CD8-positive, alpha-beta memory T cell (primary cell): ENCODE measurements at regions of chr12 and their contacts with region 1.

Region 1: GRCh38 chr12:95548539-95549391 is 2.5 kb downstream of the USP44 start:
- DNase-seq: peak; percentile 49 to 82 (median 67)
- H3K4me3 ChIP-seq: peak overlapping the region; percentile 62
- H3K4me3 Mint-ChIP-seq: peak overlapping the region; percentile 89 to 93 (median 90)
- H3K27ac ChIP-seq: peak overlapping the region; percentile 52
- H3K27ac Mint-ChIP-seq: peak overlapping the region; percentile 31 to 95 (median 84)
- H3K4me1 ChIP-seq: peaks cover 12% of the 10 kb centered on the region
- H3K4me1 Mint-ChIP-seq: peaks cover 24 to 61% (median 27%) of the 10 kb centered on the region in 3 donors
- H3K27me3 ChIP-seq: no peaks in the 10 kb centered on the region
- H3K27me3 Mint-ChIP-seq: peaks cover 11 to 20% of the 10 kb centered on the region in 2 donors

Region 2: DNA sequence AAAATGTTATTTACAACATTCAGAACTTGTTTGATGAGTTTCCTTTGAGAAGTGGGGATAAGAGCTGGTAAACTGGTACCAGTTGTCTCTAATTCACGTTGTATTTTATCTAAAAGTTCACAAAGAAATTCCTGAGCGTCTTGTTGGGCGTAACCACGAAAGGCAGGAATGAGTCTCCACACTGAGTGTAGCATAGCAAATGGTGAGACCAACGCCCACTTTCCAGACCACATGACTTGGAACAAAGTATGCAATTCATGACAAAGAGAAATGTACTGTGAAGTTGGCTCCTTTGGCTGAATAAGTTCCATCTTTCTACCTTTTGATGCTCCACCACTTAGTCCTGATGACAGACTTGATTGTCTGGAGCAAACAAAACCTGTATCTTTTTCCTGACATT is 15.9 kb before region 1 on chr12:
- CTCF ChIA-PET with region 1: interaction called, 10 read pairs
- POLR2A ChIA-PET with region 1: interaction called, 3 read pairs
- DNase-seq: no peak
- H3K4me3 ChIP-seq: no peak overlapping the region
- H3K4me3 Mint-ChIP-seq: no peak overlapping the region
- H3K27ac ChIP-seq: no peak overlapping the region
- H3K27ac Mint-ChIP-seq: peak overlapping the region in 1 of 8 donors; percentile 10
- H3K4me1 ChIP-seq: no peaks in the 10 kb centered on the region
- H3K4me1 Mint-ChIP-seq: peaks cover 0 to 7% (median 0%) of the 10 kb centered on the region in 3 donors
- H3K27me3 ChIP-seq: no peaks in the 10 kb centered on the region
- H3K27me3 Mint-ChIP-seq: peaks cover 3% of the 10 kb centered on the region in 2 donors